ENCODE measurements at regions of chr2 and their contacts with region 1.

Region 1: DNA sequence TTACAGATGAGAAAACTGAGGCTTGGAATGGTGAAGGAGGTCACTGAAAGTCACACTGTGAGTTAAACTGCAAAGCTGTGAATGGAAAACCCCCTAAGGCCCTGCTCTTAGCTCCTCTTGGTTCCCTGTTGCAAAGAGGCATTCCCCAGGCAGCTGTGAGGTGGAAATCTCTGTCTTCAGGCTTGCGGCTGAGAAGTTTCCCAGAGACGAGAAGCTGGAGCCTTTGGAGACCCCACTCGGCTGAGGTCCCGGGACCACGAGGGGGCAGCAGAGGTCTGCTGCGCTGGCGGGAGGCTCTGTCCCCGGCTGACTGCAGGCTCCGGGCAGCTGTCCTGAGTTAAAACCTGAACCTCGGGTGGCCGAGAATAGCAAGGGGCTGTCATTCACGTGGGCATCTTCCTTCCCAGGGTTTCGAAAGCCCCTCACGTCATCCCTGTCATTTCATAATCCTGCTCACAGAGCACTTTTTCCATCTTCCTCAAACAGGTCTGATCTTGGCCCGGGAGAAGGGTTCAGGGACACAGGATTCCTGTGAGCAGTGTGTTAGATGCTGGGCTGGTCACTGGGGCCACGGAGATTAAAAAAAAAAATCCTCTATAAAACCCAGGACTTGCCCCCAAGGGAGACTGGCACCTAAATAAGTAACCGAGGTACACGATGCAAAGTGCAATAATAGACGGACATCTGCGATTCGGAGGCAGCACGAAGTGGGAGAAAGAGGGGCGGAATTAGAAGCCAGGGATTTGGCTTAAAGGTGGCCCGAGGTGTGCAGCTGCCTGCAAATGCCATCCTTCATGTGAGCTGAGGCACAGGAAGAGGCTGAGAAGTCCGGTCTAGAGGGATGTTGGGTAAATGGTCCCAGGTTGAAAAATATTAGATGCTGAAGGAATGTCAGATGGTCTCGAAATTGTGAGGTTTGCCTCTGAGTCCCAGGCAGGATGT is 24.6 kb upstream of the ATOH8 start:
- DNase-seq: peak; percentile 90 to 94 (median 91)
- H3K4me3 ChIP-seq: no peak overlapping the region
- H3K27ac ChIP-seq: no peak overlapping the region
- H3K4me1 ChIP-seq: peaks cover 0 to 4% (median 3%) of the 10 kb centered on the region in 3 donors
- H3K27me3 ChIP-seq: no peaks in the 10 kb centered on the region
- CTCF ChIP-seq: peak; percentile 97

Region 2: DNA sequence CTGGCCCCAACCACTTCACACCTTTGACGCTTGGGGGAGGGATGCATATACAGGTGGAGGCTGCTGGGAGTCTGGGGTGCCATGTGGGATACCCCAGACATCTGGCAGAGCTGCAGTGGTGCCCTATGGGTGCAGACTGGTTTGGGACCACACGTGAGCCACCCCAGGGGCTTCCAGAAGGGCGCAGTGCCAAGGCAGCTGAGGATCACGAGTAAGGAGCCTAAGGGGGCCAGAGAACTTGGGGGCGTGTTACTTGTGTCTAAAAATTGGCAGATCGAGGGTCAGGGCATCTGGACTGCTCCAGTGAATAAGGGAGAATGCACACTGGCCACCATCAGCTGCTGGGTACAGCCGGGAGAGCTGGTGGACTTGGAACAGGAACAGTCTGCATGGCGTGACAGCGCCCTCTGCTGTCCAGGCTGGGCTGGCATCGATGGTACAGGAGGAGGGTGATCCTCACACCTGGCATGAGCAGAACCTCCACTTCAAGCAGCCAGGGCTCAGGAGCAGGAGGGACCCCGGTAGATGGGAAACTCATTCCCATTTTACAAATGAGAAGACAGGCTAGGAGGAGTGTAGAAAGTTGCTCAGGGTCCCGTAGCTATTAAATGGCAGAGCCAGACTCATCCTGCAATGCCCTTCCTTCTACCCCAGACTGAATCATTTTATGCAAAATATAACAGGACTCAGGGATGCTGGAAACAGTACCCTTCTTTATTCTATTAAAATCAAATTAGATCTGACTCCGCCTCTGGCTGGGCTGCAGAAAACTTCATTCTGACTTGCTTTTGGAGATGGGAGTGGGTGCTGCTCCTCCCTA is 85.0 kb after region 1 on chr2:
- intact Hi-C with region 1: loop called (anchors 5 kb)
- DNase-seq: peak; percentile 91 to 94 (median 93)
- H3K4me3 ChIP-seq: no peak overlapping the region
- H3K27ac ChIP-seq: no peak overlapping the region
- H3K4me1 ChIP-seq: peaks cover 0 to 4% (median 3%) of the 10 kb centered on the region in 3 donors
- H3K27me3 ChIP-seq: no peaks in the 10 kb centered on the region
- CTCF ChIP-seq: peak; percentile 99

Measured in kidney (tissue), 22 donors.